HepG2 (cell line): ENCODE measurements at regions of chr5 and their contacts with region 1.

Region 1: GRCh38 chr5:127564002-127564769 is 46.7 kb downstream of the PRRC1 start:
- DNase-seq: peak; percentile 57
- ATAC-seq: peak; percentile 85
- H3K4me3 ChIP-seq: no peak overlapping the region
- H3K27ac ChIP-seq: no peak overlapping the region
- H3K4me1 ChIP-seq: no peaks in the 10 kb centered on the region
- H3K27me3 ChIP-seq: peaks cover 0 to 3% of the 10 kb centered on the region in 2 experiments; a peak in 2 of 5 replicates
- CTCF ChIP-seq: peak; percentile 80
- EP300 ChIP-seq: no peak
- POLR2A ChIP-seq: no peak
- RAD21 ChIP-seq: 0 out of 2 replicates have a peak, but pooled peaks have one; percentile 23

Region 2: DNA sequence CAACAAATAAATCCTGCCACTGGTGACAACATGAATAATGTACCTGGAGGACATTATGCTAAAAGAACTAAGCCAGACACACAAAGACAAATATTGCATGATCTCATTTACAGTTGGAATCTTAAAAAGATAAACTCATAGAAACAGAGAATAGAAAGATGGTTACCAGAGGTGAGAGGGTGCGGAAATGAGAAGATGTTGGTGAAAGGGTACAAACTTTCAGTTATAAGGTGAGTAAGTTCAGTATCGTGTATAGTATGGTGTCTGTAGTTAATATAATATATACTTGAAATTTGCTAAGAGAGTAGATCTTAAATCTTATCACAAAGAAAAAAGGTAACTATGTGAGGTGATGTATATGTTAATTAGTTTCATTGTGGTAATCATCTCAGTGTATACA is 16.5 kb after region 1 on chr5:
- CTCF ChIA-PET with region 1: no interaction called
- POLR2A ChIA-PET with region 1: no interaction called
- in situ Hi-C with region 1: no loop called
- intact Hi-C with region 1: no loop called
- DNase-seq: no peak
- ATAC-seq: no peak
- H3K4me3 ChIP-seq: no peak overlapping the region
- H3K27ac ChIP-seq: no peak overlapping the region
- H3K4me1 ChIP-seq: peaks cover 5% of the 10 kb centered on the region
- H3K27me3 ChIP-seq: no peaks in the 10 kb centered on the region
- CTCF ChIP-seq: no peak
- EP300 ChIP-seq: no peak
- POLR2A ChIP-seq: no peak
- RAD21 ChIP-seq: no peak

Region 3: DNA sequence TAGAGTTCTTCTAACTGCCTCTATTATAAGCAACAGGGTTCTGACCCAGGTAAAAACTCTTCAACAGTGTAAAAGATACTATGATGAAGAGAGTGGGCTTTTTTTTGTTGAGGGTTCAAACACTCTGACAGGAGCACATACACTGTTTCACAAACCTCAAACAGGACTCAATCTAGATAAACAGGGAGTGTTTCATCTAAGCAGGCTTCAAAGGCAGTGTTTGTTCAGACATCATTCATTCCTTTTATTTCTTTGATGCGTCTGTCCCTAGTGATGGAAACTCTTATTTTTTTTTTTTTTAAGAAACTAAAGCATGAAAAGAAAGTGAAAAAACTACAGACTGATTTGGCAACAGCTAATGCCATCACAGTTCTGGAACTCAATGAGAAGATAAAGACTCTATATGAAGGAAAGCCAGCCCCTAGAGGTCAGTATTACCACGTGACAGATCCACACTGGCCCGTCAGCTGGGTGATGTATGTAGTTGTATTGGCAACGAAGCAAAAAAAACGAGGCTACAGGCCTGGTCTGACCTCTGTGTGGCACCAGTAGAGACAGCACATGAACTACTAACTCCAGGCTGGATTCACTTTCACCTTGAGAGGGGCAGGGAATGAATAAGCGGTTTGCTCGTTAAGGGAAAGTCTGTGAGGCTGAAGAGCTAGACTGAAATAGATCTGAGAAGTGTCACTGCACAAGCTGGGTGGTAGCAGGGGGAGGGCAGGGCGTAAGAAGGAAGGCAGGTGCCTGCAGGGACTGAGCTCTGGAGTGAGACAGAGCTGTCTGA is 311.2 kb after region 1 on chr5:
- CTCF ChIA-PET with region 1: no interaction called
- POLR2A ChIA-PET with region 1: no interaction called
- in situ Hi-C with region 1: no loop called
- intact Hi-C with region 1: loop called (anchors 1 kb)
- DNase-seq: peak; percentile 75
- ATAC-seq: peak; percentile 98
- H3K4me3 ChIP-seq: no peak overlapping the region
- H3K27ac ChIP-seq: no peak overlapping the region
- H3K4me1 ChIP-seq: peaks cover 9% of the 10 kb centered on the region
- H3K27me3 ChIP-seq: no peaks in the 10 kb centered on the region
- CTCF ChIP-seq: peak; percentile 80
- EP300 ChIP-seq: no peak
- POLR2A ChIP-seq: no peak
- RAD21 ChIP-seq: peak; percentile 66

Region 4: GRCh38 chr5:128674825-128675446 is 1110.8 kb after region 1 on chr5:
- CTCF ChIA-PET with region 1: no interaction called
- POLR2A ChIA-PET with region 1: no interaction called
- in situ Hi-C with region 1: no loop called
- intact Hi-C with region 1: loop called (anchors 10 kb)
- DNase-seq: peak; percentile 14
- ATAC-seq: peak; percentile 88
- H3K4me3 ChIP-seq: no peak overlapping the region
- H3K27ac ChIP-seq: no peak overlapping the region
- H3K4me1 ChIP-seq: no peaks in the 10 kb centered on the region
- H3K27me3 ChIP-seq: no peaks in the 10 kb centered on the region
- CTCF ChIP-seq: peak; percentile 60
- EP300 ChIP-seq: no peak
- POLR2A ChIP-seq: no peak
- RAD21 ChIP-seq: no peak